WTC11 (cell line): ENCODE measurements at regions of chr17 and their contacts with region 1.

Region 1: GRCh38 chr17:39730095-39730921 is at the start of gene MIEN1:
- DNase-seq: peak; percentile 97
- ATAC-seq: peak; percentile 85
- H3K4me3 Mint-ChIP-seq: peak within 1 kb of the TSS; percentile 89
- H3K27ac Mint-ChIP-seq: peak within 1 kb of the TSS; percentile 91
- H3K4me1 Mint-ChIP-seq: peaks cover 14% of the 10 kb centered on the region
- H3K27me3 Mint-ChIP-seq: no peaks in the 10 kb centered on the region
- CTCF ChIP-seq: peak; percentile 81
- total RNA-seq, gene MIEN1: 40.6 to 46.7 TPM (median 46.5 TPM) in 3 replicates

Region 2: GRCh38 chr17:39643271-39643670 is 87.0 kb before region 1 on chr17:
- CTCF ChIA-PET with region 1: interaction called, 11 read pairs
- POLR2A ChIA-PET with region 1: no interaction called
- DNase-seq: no peak
- ATAC-seq: no peak
- H3K4me3 Mint-ChIP-seq: no peak overlapping the region
- H3K27ac Mint-ChIP-seq: 0 out of 2 replicates have a peak overlapping the region, but pooled peaks have one; percentile 37
- H3K4me1 Mint-ChIP-seq: peaks cover 55% of the 10 kb centered on the region
- H3K27me3 Mint-ChIP-seq: no peaks in the 10 kb centered on the region
- CTCF ChIP-seq: no peak

Region 3: DNA sequence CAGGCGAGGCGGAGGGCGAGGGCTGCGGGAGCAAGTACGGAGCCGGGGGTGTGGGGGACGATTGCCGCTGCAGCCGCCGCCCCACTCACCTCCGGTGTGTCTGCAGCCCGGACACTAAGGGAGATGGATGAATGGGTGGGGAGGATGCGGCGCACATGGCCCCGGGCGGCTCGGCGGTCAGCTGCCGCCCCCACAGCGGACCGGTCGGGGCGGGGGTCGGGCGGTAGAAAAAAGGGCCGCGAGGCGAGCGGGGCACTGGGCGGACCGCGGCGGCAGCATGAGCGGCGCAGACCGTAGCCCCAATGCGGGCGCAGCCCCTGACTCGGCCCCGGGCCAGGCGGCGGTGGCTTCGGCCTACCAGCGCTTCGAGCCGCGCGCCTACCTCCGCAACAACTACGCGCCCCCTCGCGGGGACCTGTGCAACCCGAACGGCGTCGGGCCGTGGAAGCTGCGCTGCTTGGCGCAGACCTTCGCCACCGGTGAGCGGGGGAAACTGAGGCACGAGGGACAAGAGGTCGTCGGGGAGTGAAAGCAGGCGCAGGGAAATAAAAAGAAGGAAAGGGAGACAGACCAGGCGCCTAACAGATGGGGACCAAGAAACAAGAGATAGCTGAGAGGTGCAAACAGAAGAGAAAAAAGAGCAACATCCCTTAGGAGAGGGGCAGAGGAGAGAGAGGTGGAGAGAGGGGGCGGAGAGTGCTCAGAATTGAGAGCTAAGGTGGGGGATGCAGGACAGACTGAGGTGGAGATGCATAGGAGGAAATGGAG is 61.9 kb before region 1 on chr17 and contains the start of gene PNMT:
- CTCF ChIA-PET with region 1: interaction called, 11 read pairs
- POLR2A ChIA-PET with region 1: no interaction called
- DNase-seq: peak; percentile 83
- ATAC-seq: peak; percentile 34
- H3K4me3 Mint-ChIP-seq: peak within 1 kb of the TSS; percentile 71
- H3K27ac Mint-ChIP-seq: no peak within 1 kb of the TSS
- H3K4me1 Mint-ChIP-seq: peaks cover 48% of the 10 kb centered on the region
- H3K27me3 Mint-ChIP-seq: peaks cover 47% of the 10 kb centered on the region
- CTCF ChIP-seq: peak; percentile 26; the same call in 1 of the 2 replicates
- total RNA-seq, gene PNMT: 2.4 to 3.1 TPM (median 2.7 TPM) in 3 replicates

Region 4: DNA sequence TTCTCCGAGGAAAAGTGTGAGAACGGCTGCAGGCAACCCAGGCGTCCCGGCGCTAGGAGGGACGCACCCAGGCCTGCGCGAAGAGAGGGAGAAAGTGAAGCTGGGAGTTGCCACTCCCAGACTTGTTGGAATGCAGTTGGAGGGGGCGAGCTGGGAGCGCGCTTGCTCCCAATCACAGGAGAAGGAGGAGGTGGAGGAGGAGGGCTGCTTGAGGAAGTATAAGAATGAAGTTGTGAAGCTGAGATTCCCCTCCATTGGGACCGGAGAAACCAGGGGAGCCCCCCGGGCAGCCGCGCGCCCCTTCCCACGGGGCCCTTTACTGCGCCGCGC is 30.5 kb before region 1 on chr17 and contains the start of gene ERBB2:
- CTCF ChIA-PET with region 1: interaction called, 77 read pairs
- POLR2A ChIA-PET with region 1: interaction called, 16 read pairs
- DNase-seq: peak; percentile 73
- ATAC-seq: peak; percentile 43
- H3K4me3 Mint-ChIP-seq: peak within 1 kb of the TSS; percentile 95
- H3K27ac Mint-ChIP-seq: peak within 1 kb of the TSS; percentile 96
- H3K4me1 Mint-ChIP-seq: peaks cover 73% of the 10 kb centered on the region
- H3K27me3 Mint-ChIP-seq: no peaks in the 10 kb centered on the region
- CTCF ChIP-seq: no peak
- total RNA-seq, gene ERBB2: 153 to 209 TPM (median 158 TPM) in 3 replicates

Region 5: DNA sequence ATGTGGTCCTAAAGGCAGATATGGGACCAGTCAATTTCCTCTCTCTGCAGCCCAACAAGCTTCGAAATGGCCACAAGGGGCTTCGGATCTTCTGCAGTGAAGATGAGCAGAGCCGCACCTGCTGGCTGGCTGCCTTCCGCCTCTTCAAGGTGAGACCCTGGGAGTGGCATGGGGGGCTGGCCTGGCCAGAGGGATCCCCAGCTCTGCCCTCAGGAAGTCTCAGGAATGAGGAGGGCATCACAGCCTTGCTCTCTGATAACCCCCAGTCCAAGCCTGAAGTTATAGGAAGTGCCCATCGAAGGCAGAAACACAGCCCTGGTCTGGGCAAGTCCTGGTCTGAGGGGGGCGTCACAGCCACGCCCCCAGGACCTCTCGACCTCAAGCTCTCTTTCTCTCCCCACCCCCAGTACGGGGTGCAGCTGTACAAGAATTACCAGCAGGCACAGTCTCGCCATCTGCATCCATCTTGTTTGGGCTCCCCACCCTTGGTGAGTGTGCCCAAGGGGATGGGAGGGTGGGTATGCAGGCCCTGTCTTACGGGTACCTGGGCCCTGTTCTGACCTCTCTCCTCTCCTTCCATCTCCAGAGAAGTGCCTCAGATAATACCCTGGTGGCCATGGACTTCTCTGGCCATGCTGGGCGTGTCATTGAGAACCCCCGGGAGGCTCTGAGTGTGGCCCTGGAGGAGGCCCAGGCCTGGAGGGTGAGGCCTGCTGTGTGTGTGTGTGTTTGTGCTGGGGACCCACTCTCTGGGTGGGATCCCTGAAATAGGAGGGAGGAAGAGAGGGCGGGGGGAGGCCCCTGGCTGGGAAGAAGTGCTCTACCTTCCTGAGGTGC is 14.7 kb after region 1 on chr17:
- CTCF ChIA-PET with region 1: interaction called, 79 read pairs
- POLR2A ChIA-PET with region 1: no interaction called
- DNase-seq: no peak
- ATAC-seq: no peak
- H3K4me3 Mint-ChIP-seq: no peak overlapping the region
- H3K27ac Mint-ChIP-seq: no peak overlapping the region
- H3K4me1 Mint-ChIP-seq: peaks cover 27% of the 10 kb centered on the region
- H3K27me3 Mint-ChIP-seq: no peaks in the 10 kb centered on the region
- CTCF ChIP-seq: no peak

Region 6: GRCh38 chr17:39754161-39754951 is 24.0 kb after region 1 on chr17:
- CTCF ChIA-PET with region 1: interaction called, 79 read pairs
- POLR2A ChIA-PET with region 1: interaction called, 4 read pairs
- DNase-seq: peak; percentile 81
- ATAC-seq: peak; percentile 64
- H3K4me3 Mint-ChIP-seq: peak overlapping the region; percentile 42
- H3K27ac Mint-ChIP-seq: no peak overlapping the region
- H3K4me1 Mint-ChIP-seq: peaks cover 57% of the 10 kb centered on the region
- H3K27me3 Mint-ChIP-seq: peaks cover 19% of the 10 kb centered on the region
- CTCF ChIP-seq: peak; percentile 98

Region 7: DNA sequence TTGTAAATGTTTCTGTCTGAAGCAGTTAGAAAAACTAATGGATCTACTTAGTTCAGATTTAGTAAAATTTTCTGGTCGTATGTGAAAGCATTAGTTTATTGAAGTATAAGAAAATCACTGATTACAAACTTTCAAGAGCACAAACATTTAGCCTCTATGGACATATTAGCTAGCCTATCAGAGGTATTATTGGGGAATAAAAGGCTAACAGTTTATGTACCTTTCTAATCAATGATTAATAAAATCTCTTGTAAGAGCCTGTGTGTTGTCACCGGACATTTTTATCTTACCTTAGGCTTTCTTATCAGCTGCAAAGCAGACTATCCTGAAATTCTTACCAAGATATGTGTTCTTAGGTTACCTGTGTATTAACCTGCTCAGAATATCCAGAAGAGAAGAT is 158.9 kb after region 1 on chr17:
- CTCF ChIA-PET with region 1: no interaction called
- POLR2A ChIA-PET with region 1: no interaction called
- DNase-seq: no peak
- ATAC-seq: no peak
- H3K4me3 Mint-ChIP-seq: no peak overlapping the region
- H3K27ac Mint-ChIP-seq: no peak overlapping the region
- H3K4me1 Mint-ChIP-seq: no peaks in the 10 kb centered on the region
- H3K27me3 Mint-ChIP-seq: peaks cover 10% of the 10 kb centered on the region
- CTCF ChIP-seq: no peak